ENCODE measurements at regions of chr7 and their contacts with region 1.

Region 1: DNA sequence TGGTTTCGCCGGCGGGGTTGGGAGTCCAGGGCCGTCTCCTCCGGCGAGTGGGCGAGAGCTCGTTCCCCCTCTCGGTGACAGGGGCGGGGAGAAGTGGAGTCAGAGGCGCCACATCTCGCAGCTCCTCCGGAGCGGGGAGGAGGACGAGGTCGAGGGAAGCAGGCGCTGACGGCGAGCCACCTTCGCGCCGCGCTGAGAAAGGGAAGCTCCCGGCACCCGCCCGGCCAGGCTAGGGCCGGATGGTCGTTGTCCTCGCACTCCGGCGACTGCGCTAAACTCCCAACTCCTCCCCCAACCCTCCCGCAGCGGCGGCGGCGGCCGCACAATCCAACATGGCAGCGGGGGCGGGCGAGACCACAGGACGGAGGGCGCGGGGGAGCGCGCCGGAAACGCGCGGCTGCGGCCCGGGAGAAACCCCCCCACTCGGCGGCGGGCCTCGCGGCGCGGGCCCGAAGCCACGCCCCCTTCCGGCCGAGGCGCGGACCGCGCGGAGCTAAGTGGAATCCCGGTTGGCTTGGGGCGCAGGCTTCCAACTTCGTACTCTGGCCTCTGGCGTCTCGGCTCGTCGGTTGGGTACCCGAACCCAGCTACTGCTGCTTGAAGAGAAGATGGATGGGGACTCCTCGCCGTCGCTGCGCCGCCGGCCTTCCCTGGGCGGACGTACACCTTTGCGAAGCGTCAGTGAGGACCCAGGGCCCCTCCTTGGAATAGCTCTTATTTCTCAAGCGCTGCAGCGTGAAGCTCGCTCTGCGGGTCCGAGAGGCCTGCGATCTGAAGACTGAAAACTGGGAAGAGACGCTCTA is at the start of gene WASL:
- DNase-seq: peak; percentile 92
- ATAC-seq: peak; percentile 81
- H3K4me3 Mint-ChIP-seq: peak within 1 kb of the TSS; percentile 95
- H3K27ac Mint-ChIP-seq: peak within 1 kb of the TSS; percentile 96
- H3K4me1 Mint-ChIP-seq: peaks cover 51% of the 10 kb centered on the region
- H3K27me3 Mint-ChIP-seq: no peaks in the 10 kb centered on the region
- total RNA-seq, gene WASL: 5.5 TPM

Region 2: GRCh38 chr7:123534383-123535260 is 214.3 kb before region 1 on chr7 and contains the start of gene IQUB:
- CTCF ChIA-PET with region 1: interaction called, 3 read pairs
- POLR2A ChIA-PET with region 1: no interaction called
- intact Hi-C with region 1: loop called in 1 of 2 experiments (anchors 1 kb)
- DNase-seq: peak; percentile 99
- ATAC-seq: peak; percentile 88
- H3K4me3 Mint-ChIP-seq: peak within 1 kb of the TSS; percentile 87
- H3K27ac Mint-ChIP-seq: peak within 1 kb of the TSS; percentile 90
- H3K4me1 Mint-ChIP-seq: peaks cover 27% of the 10 kb centered on the region
- H3K27me3 Mint-ChIP-seq: peaks cover 16% of the 10 kb centered on the region
- total RNA-seq, gene IQUB: 0.05 TPM in 1 of 2 experiments, not detected in the other

Region 3: GRCh38 chr7:123557398-123558288 is 191.3 kb before region 1 on chr7 and contains the start of gene NDUFA5:
- CTCF ChIA-PET with region 1: no interaction called
- POLR2A ChIA-PET with region 1: interaction called, 3 read pairs
- intact Hi-C with region 1: loop called (anchors 1 kb)
- DNase-seq: peak; percentile 97
- ATAC-seq: peak; percentile 98
- H3K4me3 Mint-ChIP-seq: no peak within 1 kb of the TSS
- H3K27ac Mint-ChIP-seq: no peak within 1 kb of the TSS
- H3K4me1 Mint-ChIP-seq: peaks cover 18% of the 10 kb centered on the region
- H3K27me3 Mint-ChIP-seq: peaks cover 3% of the 10 kb centered on the region
- total RNA-seq, gene NDUFA5: 62.3 to 64.0 TPM

Region 4: GRCh38 chr7:123712619-123713018 is 36.3 kb before region 1 on chr7:
- CTCF ChIA-PET with region 1: interaction called, 3 read pairs
- POLR2A ChIA-PET with region 1: interaction called, 6 read pairs
- intact Hi-C with region 1: loop called (anchors 1 to 2 kb)
- DNase-seq: no peak
- ATAC-seq: no peak
- H3K4me3 Mint-ChIP-seq: no peak overlapping the region
- H3K27ac Mint-ChIP-seq: peak overlapping the region; percentile 23
- H3K4me1 Mint-ChIP-seq: peaks cover 55% of the 10 kb centered on the region
- H3K27me3 Mint-ChIP-seq: no peaks in the 10 kb centered on the region

Region 5: GRCh38 chr7:123732413-123733091 is 16.4 kb before region 1 on chr7:
- CTCF ChIA-PET with region 1: interaction called, 8 read pairs
- POLR2A ChIA-PET with region 1: no interaction called
- intact Hi-C with region 1: loop called in 1 of 2 experiments (anchors 1 kb)
- DNase-seq: no peak
- ATAC-seq: no peak
- H3K4me3 Mint-ChIP-seq: no peak overlapping the region
- H3K27ac Mint-ChIP-seq: no peak overlapping the region
- H3K4me1 Mint-ChIP-seq: peaks cover 36% of the 10 kb centered on the region
- H3K27me3 Mint-ChIP-seq: no peaks in the 10 kb centered on the region

Region 6: DNA sequence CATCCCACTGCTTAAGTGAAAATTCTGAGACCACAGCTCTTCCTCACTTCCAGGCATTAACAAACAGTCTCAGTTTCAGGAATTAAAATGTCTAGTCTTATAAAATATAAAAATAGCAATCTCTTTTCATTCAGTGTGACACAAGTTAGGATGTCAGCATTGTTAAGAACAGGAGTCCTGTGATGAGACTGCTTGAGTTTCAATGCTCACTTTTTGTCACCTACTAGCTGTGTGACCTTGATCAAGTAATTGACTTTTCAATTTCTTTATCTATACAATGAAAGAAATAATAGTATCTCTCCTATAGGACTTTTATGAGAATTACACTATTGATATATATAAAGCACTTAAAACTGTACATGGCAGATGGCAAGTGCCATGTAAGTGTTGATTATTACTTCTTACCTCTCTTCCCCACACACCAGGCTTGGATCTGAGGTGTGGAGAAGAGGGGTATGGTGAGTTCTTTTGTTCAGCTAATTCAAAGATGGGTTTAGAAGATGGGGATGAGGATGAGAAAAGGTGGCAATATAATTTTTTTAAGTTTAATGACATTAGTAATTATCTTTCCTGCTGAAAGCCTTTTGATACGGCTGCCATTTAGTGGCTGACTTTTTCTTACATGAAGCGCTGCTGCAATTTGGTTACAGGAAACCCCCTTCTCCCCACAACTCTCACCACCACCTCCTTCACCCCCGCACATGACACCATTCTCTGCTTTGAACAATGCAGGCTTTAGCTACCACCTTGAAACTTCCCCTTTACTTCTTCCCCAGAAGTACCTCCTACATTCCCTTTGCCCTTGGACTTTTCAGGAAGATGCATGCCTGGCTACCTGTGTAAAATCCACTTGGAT is 75.2 kb after region 1 on chr7:
- CTCF ChIA-PET with region 1: no interaction called
- POLR2A ChIA-PET with region 1: no interaction called
- intact Hi-C with region 1: loop called in 1 of 2 experiments (anchors 1 kb)
- DNase-seq: peak; percentile 81
- ATAC-seq: peak; percentile 90
- H3K4me3 Mint-ChIP-seq: peak overlapping the region; percentile 56
- H3K27ac Mint-ChIP-seq: peak overlapping the region; percentile 68
- H3K4me1 Mint-ChIP-seq: peaks cover 23% of the 10 kb centered on the region
- H3K27me3 Mint-ChIP-seq: peaks cover 15% of the 10 kb centered on the region

Region 7: DNA sequence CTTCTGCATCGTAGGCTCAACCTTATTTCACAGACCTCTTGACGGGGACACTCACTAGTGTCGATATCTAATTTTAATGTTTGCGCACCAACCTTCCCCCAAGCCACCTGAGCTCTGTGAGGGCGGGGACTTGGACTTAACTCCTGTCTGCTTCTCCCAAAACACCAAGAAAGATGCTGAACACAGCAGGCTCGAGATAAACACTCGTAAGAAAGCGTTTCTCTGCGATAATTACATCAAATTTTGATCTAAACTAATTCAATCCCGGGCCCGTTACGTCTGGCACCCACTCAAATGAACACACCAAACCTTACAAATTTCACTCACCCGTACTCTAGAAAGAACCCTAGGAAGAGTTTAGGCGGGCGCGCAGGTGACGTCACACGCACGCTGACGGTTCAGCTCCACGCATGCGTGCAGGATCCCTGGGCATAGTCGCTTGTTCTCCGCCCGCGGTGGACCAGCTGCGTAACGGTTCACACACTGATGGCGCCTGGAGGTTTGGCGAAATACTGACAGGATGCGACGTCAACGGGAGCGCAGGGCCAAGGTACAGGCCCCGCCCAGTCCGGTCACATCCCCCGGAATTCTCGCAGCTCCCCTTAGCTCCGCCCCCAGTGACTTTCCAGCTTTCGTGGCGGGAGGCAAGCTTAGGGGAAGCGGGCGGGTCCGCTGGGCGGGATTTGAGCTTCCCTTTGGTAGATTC is 1180.7 kb after region 1 on chr7 and contains the start of gene POT1:
- CTCF ChIA-PET with region 1: no interaction called
- POLR2A ChIA-PET with region 1: no interaction called
- intact Hi-C with region 1: loop called in 1 of 2 experiments (anchors 2 kb)
- DNase-seq: peak; percentile 98
- ATAC-seq: peak; percentile 100
- H3K4me3 Mint-ChIP-seq: peak within 1 kb of the TSS; percentile 100
- H3K27ac Mint-ChIP-seq: peak within 1 kb of the TSS; percentile 99
- H3K4me1 Mint-ChIP-seq: peaks cover 37% of the 10 kb centered on the region
- H3K27me3 Mint-ChIP-seq: no peaks in the 10 kb centered on the region
- total RNA-seq, gene POT1: 33.9 to 51.3 TPM